HepG2 (cell line): ENCODE measurements at regions of chr5 and their contacts with region 1.

Region 1: GRCh38 chr5:71697967-71698366 is 21.1 kb upstream of the CARTPT start:
- DNase-seq: peak; percentile 7
- ATAC-seq: no peak
- H3K4me3 ChIP-seq: no peak overlapping the region
- H3K27ac ChIP-seq: no peak overlapping the region
- H3K4me1 ChIP-seq: peaks cover 35% of the 10 kb centered on the region
- H3K27me3 ChIP-seq: peaks cover 0 to 2% of the 10 kb centered on the region in 2 experiments; a peak in 1 of 5 replicates
- CTCF ChIP-seq: peak; percentile 61
- EP300 ChIP-seq: no peak
- POLR2A ChIP-seq: no peak
- RAD21 ChIP-seq: no peak

Region 2: GRCh38 chr5:71658916-71659662 is 38.9 kb before region 1 on chr5:
- CTCF ChIA-PET with region 1: no interaction called
- POLR2A ChIA-PET with region 1: interaction called, 7 read pairs
- in situ Hi-C with region 1: no loop called
- intact Hi-C with region 1: loop called (anchors 5 kb)
- DNase-seq: peak; percentile 31
- ATAC-seq: no peak
- H3K4me3 ChIP-seq: no peak overlapping the region
- H3K27ac ChIP-seq: no peak overlapping the region
- H3K4me1 ChIP-seq: peaks cover 17% of the 10 kb centered on the region
- H3K27me3 ChIP-seq: no peaks in the 10 kb centered on the region
- CTCF ChIP-seq: peak; percentile 48
- EP300 ChIP-seq: no peak
- POLR2A ChIP-seq: no peak
- RAD21 ChIP-seq: no peak

Region 3: GRCh38 chr5:71684309-71684708 is 13.7 kb before region 1 on chr5:
- CTCF ChIA-PET with region 1: no interaction called
- POLR2A ChIA-PET with region 1: interaction called, 11 read pairs
- in situ Hi-C with region 1: no loop called
- intact Hi-C with region 1: no loop called
- DNase-seq: no peak
- ATAC-seq: no peak
- H3K4me3 ChIP-seq: no peak overlapping the region
- H3K27ac ChIP-seq: no peak overlapping the region
- H3K4me1 ChIP-seq: no peaks in the 10 kb centered on the region
- H3K27me3 ChIP-seq: no peaks in the 10 kb centered on the region; a peak in 1 of 5 replicates
- CTCF ChIP-seq: no peak
- EP300 ChIP-seq: no peak
- POLR2A ChIP-seq: no peak
- RAD21 ChIP-seq: no peak